ENCODE measurements at regions of chr2 and their contacts with region 1.

Region 1: GRCh38 chr2:68196120-68196716 is 38.5 kb downstream of the PNO1 start:
- DNase-seq: peak in 4 of 5 donors; percentile 48 to 64 (median 57)
- H3K4me3 ChIP-seq: no peak overlapping the region
- H3K4me3 Mint-ChIP-seq: no peak overlapping the region
- H3K27ac ChIP-seq: no peak overlapping the region
- H3K27ac Mint-ChIP-seq: peak overlapping the region in 4 of 7 donors; percentile 38 to 91 (median 47)
- H3K4me1 ChIP-seq: peaks cover 47% of the 10 kb centered on the region
- H3K4me1 Mint-ChIP-seq: peaks cover 32 to 74% (median 51%) of the 10 kb centered on the region in 4 donors
- H3K27me3 ChIP-seq: no peaks in the 10 kb centered on the region
- H3K27me3 Mint-ChIP-seq: no peaks in the 10 kb centered on the region

Region 2: DNA sequence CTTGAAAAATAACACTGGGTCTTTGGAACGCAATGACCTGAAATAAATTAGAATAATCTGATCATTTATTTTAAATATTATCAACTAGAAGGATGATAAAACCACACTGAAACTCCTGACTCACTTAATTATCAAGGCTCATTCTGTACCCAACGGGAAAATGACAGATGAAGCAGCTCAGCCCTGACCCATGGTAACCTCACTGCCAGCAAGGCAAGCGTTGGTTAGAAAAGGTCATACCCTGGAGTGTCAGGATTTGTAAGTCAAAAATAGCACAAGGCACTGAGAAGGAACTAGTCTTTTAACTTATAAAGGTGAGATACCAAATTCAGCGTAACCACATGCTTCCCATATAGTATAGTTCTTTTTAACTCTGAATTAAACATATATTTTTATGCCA is 521.5 kb before region 1 on chr2:
- CTCF ChIA-PET with region 1: no interaction called
- POLR2A ChIA-PET with region 1: no interaction called
- intact Hi-C with region 1: no loop called
- DNase-seq: no peak
- H3K4me3 ChIP-seq: no peak overlapping the region
- H3K4me3 Mint-ChIP-seq: no peak overlapping the region
- H3K27ac ChIP-seq: no peak overlapping the region
- H3K27ac Mint-ChIP-seq: no peak overlapping the region
- H3K4me1 ChIP-seq: no peaks in the 10 kb centered on the region
- H3K4me1 Mint-ChIP-seq: no peaks in the 10 kb centered on the region
- H3K27me3 ChIP-seq: no peaks in the 10 kb centered on the region
- H3K27me3 Mint-ChIP-seq: no peaks in the 10 kb centered on the region

Region 3: GRCh38 chr2:68157402-68158133 is 38.6 kb before region 1 on chr2 and contains the start of gene PNO1:
- CTCF ChIA-PET with region 1: interaction called, 10 read pairs
- POLR2A ChIA-PET with region 1: interaction called, 10 read pairs
- intact Hi-C with region 1: no loop called
- DNase-seq: peak; percentile 97 to 98 (median 98)
- H3K4me3 ChIP-seq: peak within 1 kb of the TSS; percentile 82 to 97
- H3K4me3 Mint-ChIP-seq: peak within 1 kb of the TSS; percentile 95 to 99 (median 98)
- H3K27ac ChIP-seq: peak within 1 kb of the TSS; percentile 97
- H3K27ac Mint-ChIP-seq: peak within 1 kb of the TSS; percentile 99 to 100 (median 100)
- H3K4me1 ChIP-seq: peaks cover 40% of the 10 kb centered on the region
- H3K4me1 Mint-ChIP-seq: peaks cover 29 to 65% (median 45%) of the 10 kb centered on the region in 4 donors
- H3K27me3 ChIP-seq: no peaks in the 10 kb centered on the region
- H3K27me3 Mint-ChIP-seq: peaks cover 0 to 2% of the 10 kb centered on the region in 2 donors
- total RNA-seq, gene PNO1: 8.7 to 11.3 TPM

Region 4: DNA sequence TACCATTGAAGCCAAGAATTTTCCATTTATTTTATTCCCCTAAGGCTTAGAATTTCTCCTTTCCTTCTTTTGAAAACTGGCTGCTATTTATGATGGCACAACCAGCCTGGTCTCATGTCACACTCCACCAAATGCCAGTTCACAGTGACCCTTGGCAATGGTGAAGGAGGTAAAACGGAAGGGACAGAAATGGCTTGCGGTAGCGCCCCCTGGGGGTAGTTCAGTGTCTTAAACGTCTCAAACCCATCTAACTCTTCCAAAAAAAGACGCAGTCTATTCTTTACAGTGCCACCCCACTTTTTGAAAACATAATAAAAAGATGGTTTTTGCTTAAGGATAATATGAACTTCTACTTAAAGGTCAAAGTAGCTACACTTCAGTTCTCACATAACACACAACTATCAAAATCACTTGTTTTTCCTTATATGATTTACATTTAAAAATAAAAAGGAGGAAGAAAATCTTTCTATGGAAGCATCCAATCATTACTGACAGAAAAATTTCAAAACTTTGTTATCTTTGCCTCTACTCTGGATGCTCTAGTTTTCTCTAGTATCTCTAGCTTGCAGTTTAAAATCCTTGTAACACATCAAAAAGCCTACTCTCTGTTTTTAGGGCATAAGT is 10.6 kb before region 1 on chr2:
- CTCF ChIA-PET with region 1: interaction called, 42 read pairs
- POLR2A ChIA-PET with region 1: interaction called, 3 read pairs
- intact Hi-C with region 1: no loop called
- DNase-seq: peak; percentile 42 to 59 (median 45)
- H3K4me3 ChIP-seq: no peak overlapping the region
- H3K4me3 Mint-ChIP-seq: no peak overlapping the region
- H3K27ac ChIP-seq: no peak overlapping the region
- H3K27ac Mint-ChIP-seq: peak overlapping the region in 6 of 7 donors; percentile 30 to 89 (median 54)
- H3K4me1 ChIP-seq: peaks cover 16% of the 10 kb centered on the region
- H3K4me1 Mint-ChIP-seq: peaks cover 18 to 35% (median 33%) of the 10 kb centered on the region in 4 donors
- H3K27me3 ChIP-seq: no peaks in the 10 kb centered on the region
- H3K27me3 Mint-ChIP-seq: no peaks in the 10 kb centered on the region

Region 5: DNA sequence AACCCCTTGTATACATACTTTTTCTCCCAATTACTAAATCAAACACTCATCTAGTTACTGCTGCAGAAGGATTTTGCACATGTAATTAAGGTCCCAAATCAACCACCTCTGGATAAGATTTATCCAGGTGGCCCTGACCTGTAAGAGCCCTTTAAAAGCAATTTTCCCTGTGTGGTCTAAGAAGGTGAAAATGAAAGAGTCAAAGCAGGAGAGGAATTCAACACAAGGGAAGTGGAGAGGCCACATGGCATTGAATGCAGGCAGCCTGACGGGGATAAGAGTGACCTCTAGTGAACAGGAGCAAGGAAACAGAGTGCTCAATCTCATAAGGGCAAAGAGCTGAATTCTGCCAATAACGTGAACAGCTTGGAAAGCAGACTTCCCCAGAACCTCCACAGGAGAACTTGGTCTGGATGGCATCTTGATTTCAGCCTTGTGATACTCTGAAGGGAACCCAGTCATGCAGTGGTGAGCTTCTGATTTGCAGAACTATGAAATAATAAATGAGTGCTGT is 29.0 kb after region 1 on chr2:
- CTCF ChIA-PET with region 1: interaction called, 36 read pairs
- POLR2A ChIA-PET with region 1: no interaction called
- intact Hi-C with region 1: loop called (anchors 2 kb)
- DNase-seq: peak in 4 of 5 donors; percentile 11 to 26 (median 18)
- H3K4me3 ChIP-seq: no peak overlapping the region
- H3K4me3 Mint-ChIP-seq: peak overlapping the region in 6 of 8 donors; percentile 0 to 82 (median 38)
- H3K27ac ChIP-seq: no peak overlapping the region
- H3K27ac Mint-ChIP-seq: peak overlapping the region; percentile 3 to 91 (median 19)
- H3K4me1 ChIP-seq: peaks cover 94% of the 10 kb centered on the region
- H3K4me1 Mint-ChIP-seq: peaks cover 71 to 99% (median 83%) of the 10 kb centered on the region in 4 donors
- H3K27me3 ChIP-seq: no peaks in the 10 kb centered on the region
- H3K27me3 Mint-ChIP-seq: no peaks in the 10 kb centered on the region

Region 6: DNA sequence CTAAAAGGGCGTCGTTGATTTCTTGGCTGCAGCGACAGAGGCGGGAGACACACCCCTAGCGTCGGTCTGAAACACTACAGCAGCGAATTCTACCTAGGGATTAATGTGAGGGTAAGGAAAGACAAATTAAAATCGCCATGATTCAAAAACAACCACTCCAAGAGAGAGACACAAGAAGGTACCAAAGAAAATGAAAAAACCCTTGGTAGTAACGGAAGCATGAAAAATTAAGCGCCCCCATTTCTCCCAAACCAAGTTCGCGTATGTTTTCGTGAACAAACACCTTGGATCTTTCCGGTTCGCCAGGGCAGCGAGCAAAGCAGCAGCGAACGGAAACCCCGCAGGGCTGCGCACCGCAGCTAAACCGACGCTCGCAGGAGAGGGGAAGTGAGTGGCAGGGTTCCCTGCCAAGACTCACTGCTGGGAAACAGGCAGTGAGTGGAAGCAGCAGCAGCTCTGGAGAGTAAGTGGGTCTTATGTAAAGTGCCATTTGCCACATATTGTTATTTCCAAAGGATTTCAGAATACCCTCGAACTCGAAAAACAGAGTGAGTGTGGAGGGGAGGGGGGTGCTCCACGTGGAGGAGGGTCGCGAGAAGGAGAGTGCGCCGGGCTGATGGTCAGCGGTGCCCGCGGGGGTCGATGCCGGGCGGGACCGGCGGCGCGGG is 55.1 kb after region 1 on chr2:
- CTCF ChIA-PET with region 1: interaction called, 38 read pairs
- POLR2A ChIA-PET with region 1: interaction called, 20 read pairs
- intact Hi-C with region 1: loop called (anchors 1 kb)
- DNase-seq: peak; percentile 81 to 93 (median 86)
- H3K4me3 ChIP-seq: peak overlapping the region; percentile 66 to 83
- H3K4me3 Mint-ChIP-seq: peak overlapping the region in 7 of 8 donors; percentile 87 to 100 (median 94)
- H3K27ac ChIP-seq: peak overlapping the region; percentile 91
- H3K27ac Mint-ChIP-seq: peak overlapping the region in 6 of 7 donors; percentile 91 to 99 (median 97)
- H3K4me1 ChIP-seq: peaks cover 70% of the 10 kb centered on the region
- H3K4me1 Mint-ChIP-seq: peaks cover 20 to 59% (median 34%) of the 10 kb centered on the region in 4 donors
- H3K27me3 ChIP-seq: no peaks in the 10 kb centered on the region
- H3K27me3 Mint-ChIP-seq: peaks cover 0 to 4% of the 10 kb centered on the region in 2 donors

Region 7: DNA sequence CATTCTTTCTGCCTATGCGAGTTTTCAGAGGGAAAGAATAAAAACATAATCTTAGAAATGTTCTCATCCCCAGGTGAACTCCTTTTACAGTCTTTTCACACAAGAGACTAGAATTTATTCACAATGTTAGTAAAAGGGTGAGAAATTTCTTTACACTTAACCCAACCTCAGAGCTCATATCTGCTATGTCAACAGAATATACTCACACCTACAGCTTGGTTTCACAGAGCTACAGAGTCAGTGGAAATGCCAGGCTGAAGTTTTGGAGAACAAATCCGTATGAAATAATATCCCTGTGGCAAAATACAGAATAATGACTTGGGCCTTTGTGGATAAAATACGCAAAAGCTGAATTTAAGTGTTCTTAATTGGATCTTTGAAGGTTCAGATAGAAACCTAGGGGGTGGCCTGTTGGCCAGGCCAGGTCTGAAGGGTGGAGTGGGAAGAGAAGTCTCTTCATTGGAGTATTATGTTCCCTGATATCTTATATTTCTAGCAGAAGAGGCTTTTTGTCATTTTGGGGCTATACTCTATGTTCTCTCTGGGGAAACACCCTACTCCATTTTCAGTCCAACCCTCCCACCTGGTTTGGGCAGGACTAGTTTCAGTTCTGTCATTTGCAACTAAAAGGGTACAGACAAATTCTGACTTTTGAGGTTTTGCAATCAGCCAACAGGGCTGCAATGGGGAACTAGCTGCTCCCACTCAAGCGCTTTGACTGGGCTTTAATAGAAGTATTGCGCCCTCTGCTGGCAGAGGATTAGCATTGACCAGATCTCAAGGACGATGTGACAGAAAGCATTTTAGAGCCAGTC is 245.2 kb after region 1 on chr2:
- CTCF ChIA-PET with region 1: interaction called, 11 read pairs
- POLR2A ChIA-PET with region 1: no interaction called
- intact Hi-C with region 1: no loop called
- DNase-seq: peak; percentile 78 to 87 (median 83)
- H3K4me3 ChIP-seq: no peak overlapping the region
- H3K4me3 Mint-ChIP-seq: peak overlapping the region in 5 of 8 donors; percentile 24 to 62 (median 37)
- H3K27ac ChIP-seq: peak overlapping the region; percentile 3
- H3K27ac Mint-ChIP-seq: peak overlapping the region; percentile 65 to 94 (median 89)
- H3K4me1 ChIP-seq: peaks cover 16% of the 10 kb centered on the region
- H3K4me1 Mint-ChIP-seq: peaks cover 8 to 24% (median 15%) of the 10 kb centered on the region in 4 donors
- H3K27me3 ChIP-seq: no peaks in the 10 kb centered on the region
- H3K27me3 Mint-ChIP-seq: no peaks in the 10 kb centered on the region

Region 8: GRCh38 chr2:68475110-68475509 is 278.9 kb after region 1 on chr2:
- CTCF ChIA-PET with region 1: no interaction called
- POLR2A ChIA-PET with region 1: no interaction called
- intact Hi-C with region 1: no loop called
- DNase-seq: no peak
- H3K4me3 ChIP-seq: no peak overlapping the region
- H3K4me3 Mint-ChIP-seq: no peak overlapping the region
- H3K27ac ChIP-seq: no peak overlapping the region
- H3K27ac Mint-ChIP-seq: no peak overlapping the region
- H3K4me1 ChIP-seq: no peaks in the 10 kb centered on the region
- H3K4me1 Mint-ChIP-seq: peaks cover 0 to 2% (median 0%) of the 10 kb centered on the region in 4 donors
- H3K27me3 ChIP-seq: no peaks in the 10 kb centered on the region
- H3K27me3 Mint-ChIP-seq: no peaks in the 10 kb centered on the region

Measured in CD4-positive, alpha-beta memory T cell (primary cell).